WTC11 (cell line): ENCODE measurements at regions of chr2 and their contacts with region 1.

Region 1: DNA sequence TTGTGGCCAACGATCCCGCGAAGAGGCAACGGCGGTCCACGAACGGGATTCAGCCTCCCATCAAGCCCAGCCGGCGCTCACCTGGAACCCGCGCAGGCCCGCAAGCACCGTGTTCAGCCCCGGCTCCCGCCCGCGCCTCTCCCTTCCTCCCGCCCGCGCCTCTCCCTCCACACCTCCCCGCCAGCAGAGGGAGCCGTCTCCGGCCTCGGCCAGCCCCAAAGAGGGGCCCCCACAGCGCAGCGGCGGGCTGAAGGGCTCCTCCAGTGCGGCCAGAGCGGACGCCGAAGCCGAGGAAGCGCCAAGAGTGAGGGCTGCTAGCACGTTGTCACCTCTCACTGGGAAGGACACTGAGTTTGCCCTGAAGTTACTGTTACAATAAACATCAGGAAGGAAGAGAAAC is 55.3 kb upstream of the LAPTM4A start:
- DNase-seq: peak; percentile 91
- ATAC-seq: peak; percentile 92
- H3K4me3 Mint-ChIP-seq: peak overlapping the region; percentile 64
- H3K27ac Mint-ChIP-seq: no peak overlapping the region
- H3K4me1 Mint-ChIP-seq: peaks cover 7% of the 10 kb centered on the region
- H3K27me3 Mint-ChIP-seq: peaks cover 43% of the 10 kb centered on the region
- CTCF ChIP-seq: peak; percentile 55

Region 2: DNA sequence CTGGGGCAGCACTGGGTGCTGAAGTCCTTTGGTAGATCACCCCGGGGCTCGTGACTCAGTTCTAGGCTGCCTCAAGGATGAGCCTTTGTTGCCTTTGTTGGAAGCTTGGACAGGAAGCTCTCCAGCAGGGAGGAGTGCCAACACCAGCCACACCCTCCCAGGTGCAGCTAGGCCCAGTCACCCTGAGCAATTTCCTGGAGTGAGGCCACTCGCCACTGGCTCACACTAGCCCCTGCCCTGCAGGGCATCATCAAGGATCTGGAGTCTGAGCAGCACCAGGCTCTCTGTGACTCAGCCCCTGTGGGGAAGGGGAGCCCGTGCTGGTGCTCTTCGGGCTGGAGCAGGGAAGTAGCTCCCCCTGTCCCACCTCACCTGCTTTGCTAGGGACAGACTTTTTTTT is 124.9 kb after region 1 on chr2:
- CTCF ChIA-PET with region 1: interaction called, 38 read pairs
- POLR2A ChIA-PET with region 1: no interaction called
- DNase-seq: peak; percentile 37
- ATAC-seq: peak; percentile 90
- H3K4me3 Mint-ChIP-seq: no peak overlapping the region
- H3K27ac Mint-ChIP-seq: no peak overlapping the region
- H3K4me1 Mint-ChIP-seq: peaks cover 20% of the 10 kb centered on the region
- H3K27me3 Mint-ChIP-seq: peaks cover 7% of the 10 kb centered on the region; the same call in 1 of the 2 replicates
- CTCF ChIP-seq: no peak